Natural killer cell (primary cell): ENCODE measurements at regions of chr16 and their contacts with region 1.

Region 1: DNA sequence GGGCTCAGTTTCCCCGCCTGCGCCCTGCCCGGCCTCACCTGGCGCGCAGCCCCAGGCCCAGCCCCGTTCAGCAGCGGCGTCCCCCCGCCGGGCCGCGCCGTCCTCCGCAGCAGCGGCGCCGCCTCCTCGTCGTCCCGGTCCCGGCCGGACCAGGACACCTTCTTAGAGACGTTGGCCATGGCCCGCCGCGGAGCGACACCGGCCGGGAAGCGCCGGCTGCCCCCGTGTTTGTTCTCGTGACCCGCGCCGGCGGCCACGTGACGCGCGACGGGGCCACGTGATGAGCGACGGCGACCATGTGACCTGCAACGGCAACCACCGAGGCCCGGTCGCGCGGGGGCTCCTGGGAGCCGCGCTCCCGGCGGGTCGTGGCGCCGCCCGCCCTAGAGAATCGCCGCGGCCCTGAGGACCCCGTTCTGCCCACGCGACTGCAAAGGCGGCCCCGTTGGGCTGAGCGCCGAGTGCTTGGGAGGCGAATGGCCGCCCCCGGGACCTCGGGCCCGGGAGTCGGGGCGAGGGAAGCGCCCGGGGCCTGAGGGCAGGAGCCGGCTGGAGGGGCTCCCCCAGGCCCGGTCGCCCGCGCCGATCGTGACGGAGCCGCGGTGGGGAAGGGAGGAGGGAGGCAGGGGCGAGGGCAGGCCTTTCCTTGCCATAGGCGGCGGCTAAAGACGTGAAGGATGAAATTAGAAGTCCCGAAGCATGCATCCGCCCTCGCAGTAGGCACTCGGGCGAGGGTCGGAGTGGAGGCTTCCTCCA is at the start of gene CLCN7:
- DNase-seq: peak; percentile 92 to 93
- ATAC-seq: peak; percentile 85 to 96 (median 91)
- H3K4me3 ChIP-seq: peak within 1 kb of the TSS; percentile 58
- H3K4me3 Mint-ChIP-seq: peak within 1 kb of the TSS; percentile 80
- H3K27ac ChIP-seq: peak within 1 kb of the TSS; percentile 78
- H3K27ac Mint-ChIP-seq: peak within 1 kb of the TSS; percentile 67 to 86
- H3K4me1 ChIP-seq: peaks cover 40% of the 10 kb centered on the region
- H3K4me1 Mint-ChIP-seq: peaks cover 9 to 34% of the 10 kb centered on the region in 2 donors
- H3K27me3 ChIP-seq: no peaks in the 10 kb centered on the region
- H3K27me3 Mint-ChIP-seq: no peaks in the 10 kb centered on the region
- CTCF ChIP-seq: no peak
- total RNA-seq, gene CLCN7: 117 to 125 (median 118) TPM

Region 2: GRCh38 chr16:1430759-1431496 is 44.0 kb before region 1 on chr16 and contains the start of gene PERCC1:
- intact Hi-C with region 1: no loop called
- DNase-seq: no peak
- ATAC-seq: no peak
- H3K4me3 ChIP-seq: no peak within 1 kb of the TSS
- H3K4me3 Mint-ChIP-seq: peak within 1 kb of the TSS; percentile 59
- H3K27ac ChIP-seq: no peak within 1 kb of the TSS
- H3K27ac Mint-ChIP-seq: peak within 1 kb of the TSS in 1 of 2 donors; percentile 78
- H3K4me1 ChIP-seq: peaks cover 41% of the 10 kb centered on the region
- H3K4me1 Mint-ChIP-seq: peaks cover 0 to 7% of the 10 kb centered on the region in 2 donors
- H3K27me3 ChIP-seq: no peaks in the 10 kb centered on the region
- H3K27me3 Mint-ChIP-seq: no peaks in the 10 kb centered on the region
- CTCF ChIP-seq: no peak
- total RNA-seq, gene PERCC1: 0.68 to 0.96 (median 0.83) TPM

Region 3: GRCh38 chr16:1492923-1493745 is 18.2 kb after region 1 on chr16 and contains the start of gene TELO2:
- intact Hi-C with region 1: loop called (anchors 1 kb)
- DNase-seq: peak; percentile 86 to 95
- ATAC-seq: peak; percentile 93 to 95 (median 95)
- H3K4me3 ChIP-seq: peak within 1 kb of the TSS; percentile 86
- H3K4me3 Mint-ChIP-seq: peak within 1 kb of the TSS; percentile 90
- H3K27ac ChIP-seq: peak within 1 kb of the TSS; percentile 88
- H3K27ac Mint-ChIP-seq: peak within 1 kb of the TSS; percentile 92 to 94
- H3K4me1 ChIP-seq: peaks cover 23% of the 10 kb centered on the region
- H3K4me1 Mint-ChIP-seq: peaks cover 9 to 16% of the 10 kb centered on the region in 2 donors
- H3K27me3 ChIP-seq: no peaks in the 10 kb centered on the region
- H3K27me3 Mint-ChIP-seq: peaks cover 0 to 2% of the 10 kb centered on the region in 2 donors
- CTCF ChIP-seq: no peak
- total RNA-seq, gene TELO2: 45.5 to 50.0 (median 46.5) TPM

Region 4: DNA sequence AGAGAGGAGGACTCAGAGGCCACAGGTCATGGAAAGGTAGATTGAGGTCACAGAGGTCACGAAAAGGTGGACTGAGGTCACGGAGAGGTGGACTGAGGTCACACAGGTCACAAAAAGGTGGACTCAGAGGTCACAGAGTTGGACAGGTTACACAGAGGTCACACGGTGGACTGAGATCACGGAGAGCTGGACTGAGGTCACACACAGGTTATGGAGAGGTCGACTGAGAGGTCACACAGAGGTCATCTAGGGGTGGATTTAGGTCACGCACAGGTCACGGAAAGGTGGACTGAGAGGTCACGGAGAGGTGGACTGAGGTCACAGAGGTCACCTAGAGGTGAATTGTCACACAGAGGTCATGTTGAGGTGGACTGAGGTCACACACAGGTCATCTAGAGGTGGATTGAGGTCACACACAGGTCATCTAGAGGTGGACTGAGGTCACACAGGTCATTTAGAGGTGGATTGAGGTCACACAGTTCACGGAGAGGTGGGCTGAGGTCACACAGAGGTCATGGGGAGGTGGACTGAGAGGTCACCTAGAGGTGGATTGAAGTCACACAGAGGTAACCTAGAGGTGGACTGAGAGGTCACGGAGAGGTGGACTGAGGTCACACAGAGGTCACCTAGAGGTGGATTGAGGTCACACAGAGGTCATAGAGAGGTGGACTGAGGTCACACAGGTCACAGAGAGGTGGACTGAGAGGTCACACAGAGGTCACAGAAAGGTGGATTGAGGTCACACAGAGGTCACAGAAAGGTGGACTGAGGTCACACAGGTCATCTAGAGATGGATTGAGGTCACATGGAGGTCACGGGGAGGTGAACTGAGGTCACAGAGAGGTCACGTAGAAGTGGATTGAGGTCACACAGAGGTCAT is 176.4 kb after region 1 on chr16:
- intact Hi-C with region 1: no loop called
- DNase-seq: no peak
- ATAC-seq: peak in 1 of 3 donors; percentile 11
- H3K4me3 ChIP-seq: no peak overlapping the region
- H3K4me3 Mint-ChIP-seq: no peak overlapping the region
- H3K27ac ChIP-seq: no peak overlapping the region
- H3K27ac Mint-ChIP-seq: peak overlapping the region; percentile 54 to 89
- H3K4me1 ChIP-seq: peaks cover 8% of the 10 kb centered on the region
- H3K4me1 Mint-ChIP-seq: peaks cover 27 to 42% of the 10 kb centered on the region in 2 donors
- H3K27me3 ChIP-seq: no peaks in the 10 kb centered on the region
- H3K27me3 Mint-ChIP-seq: no peaks in the 10 kb centered on the region
- CTCF ChIP-seq: no peak